ENCODE measurements at regions of chr9 and their contacts with region 1.

Region 1: GRCh38 chr9:93642961-93643360 is 66.6 kb downstream of the PHF2 start:
- DNase-seq: peak in 4 of 5 donors; percentile 6 to 24 (median 10)
- H3K4me3 ChIP-seq: no peak overlapping the region
- H3K27ac ChIP-seq: no peak overlapping the region
- H3K4me1 ChIP-seq: peaks cover 3% of the 10 kb centered on the region
- H3K27me3 ChIP-seq: no peaks in the 10 kb centered on the region
- CTCF ChIP-seq: no peak
- EP300 ChIP-seq: no peak
- POLR2A ChIP-seq: no peak

Region 2: GRCh38 chr9:92576175-92576574 is 1066.8 kb before region 1 on chr9:
- intact Hi-C with region 1: loop called in 1 of 4 experiments (anchors 5 kb)
- DNase-seq: no peak
- H3K4me3 ChIP-seq: no peak overlapping the region
- H3K27ac ChIP-seq: no peak overlapping the region
- H3K4me1 ChIP-seq: no peaks in the 10 kb centered on the region
- H3K27me3 ChIP-seq: no peaks in the 10 kb centered on the region
- CTCF ChIP-seq: no peak
- EP300 ChIP-seq: no peak
- POLR2A ChIP-seq: no peak

Region 3: DNA sequence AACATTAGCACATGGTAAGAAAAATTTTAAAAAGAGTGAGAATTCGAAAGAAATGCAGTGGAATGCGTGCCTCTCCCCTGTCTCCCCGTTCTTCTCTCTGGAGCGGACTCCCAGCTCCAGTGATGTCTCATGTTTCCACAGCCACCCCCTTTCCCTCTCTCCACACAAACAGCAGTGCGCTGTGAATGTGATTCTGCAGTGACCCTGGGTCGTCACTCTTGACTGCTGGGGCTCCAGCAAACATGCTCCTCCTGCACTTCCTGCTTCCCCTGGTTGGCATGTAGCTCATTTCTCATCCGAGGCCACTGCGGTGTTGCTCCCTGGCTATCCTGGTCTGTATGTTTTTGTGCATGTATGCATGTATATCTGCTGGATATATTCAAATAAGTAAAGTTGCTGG is 53.3 kb before region 1 on chr9:
- intact Hi-C with region 1: loop called in 1 of 4 experiments (anchors 10 kb)
- DNase-seq: peak in 3 of 5 donors; percentile 15 to 28 (median 24)
- H3K4me3 ChIP-seq: no peak overlapping the region
- H3K27ac ChIP-seq: no peak overlapping the region
- H3K4me1 ChIP-seq: peaks cover 10% of the 10 kb centered on the region
- H3K27me3 ChIP-seq: no peaks in the 10 kb centered on the region
- CTCF ChIP-seq: no peak
- EP300 ChIP-seq: no peak
- POLR2A ChIP-seq: no peak

Region 4: DNA sequence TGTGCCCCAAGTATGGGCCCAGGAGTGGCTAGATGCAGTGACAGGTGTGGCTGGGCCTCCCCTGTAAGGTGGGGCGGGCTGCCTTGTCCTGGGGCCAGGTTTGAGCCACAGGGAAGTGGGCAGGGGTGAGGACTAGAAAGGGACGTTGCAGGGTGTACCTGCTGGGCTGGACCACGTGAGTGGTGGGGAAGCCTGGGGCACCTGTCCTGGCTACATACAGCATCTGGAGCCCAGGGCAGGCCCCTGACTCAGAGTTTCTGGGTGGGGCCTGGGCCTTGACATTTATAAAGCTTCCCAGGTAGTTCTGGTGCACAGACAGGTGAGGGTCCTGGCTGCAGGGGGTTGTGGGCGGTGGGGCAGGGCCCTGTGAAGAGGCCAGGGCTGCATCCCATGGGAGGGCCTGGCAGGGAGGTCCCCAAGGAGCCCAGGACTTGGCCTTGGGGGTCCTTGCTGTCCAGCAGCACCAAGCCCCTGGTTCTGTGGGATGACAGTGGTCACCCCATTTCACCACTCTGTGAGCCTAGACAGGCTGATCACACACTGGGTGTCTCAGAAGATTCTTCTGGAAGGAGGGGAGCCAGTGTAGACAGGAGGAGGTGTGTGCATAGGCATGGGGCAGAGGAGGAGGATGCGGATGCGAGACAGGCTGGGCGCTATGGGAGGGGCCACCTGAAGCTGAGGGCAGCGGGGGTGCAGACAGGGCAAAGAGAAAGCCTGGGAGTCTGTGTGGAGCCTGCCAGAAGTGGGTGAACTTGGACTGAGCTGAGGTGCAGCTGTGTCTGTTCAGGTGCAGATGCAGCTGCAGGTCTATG is 27.5 kb after region 1 on chr9:
- intact Hi-C with region 1: no loop called
- DNase-seq: peak in 4 of 5 donors; percentile 6 to 25 (median 10)
- H3K4me3 ChIP-seq: no peak overlapping the region
- H3K27ac ChIP-seq: no peak overlapping the region
- H3K4me1 ChIP-seq: no peaks in the 10 kb centered on the region
- H3K27me3 ChIP-seq: no peaks in the 10 kb centered on the region
- CTCF ChIP-seq: no peak
- EP300 ChIP-seq: no peak
- POLR2A ChIP-seq: no peak